ENCODE measurements at regions of chr22 and their contacts with region 1.

Region 1: GRCh38 chr22:23591201-23591791 is 11.2 kb upstream of the IGLL1 start:
- DNase-seq: peak; percentile 59
- H3K4me3 ChIP-seq: no peak overlapping the region
- H3K27ac ChIP-seq: no peak overlapping the region
- H3K4me1 ChIP-seq: no peaks in the 10 kb centered on the region
- H3K27me3 ChIP-seq: no peaks in the 10 kb centered on the region
- CTCF ChIP-seq: peak; percentile 88 to 92
- POLR2A ChIP-seq: no peak

Region 2: DNA sequence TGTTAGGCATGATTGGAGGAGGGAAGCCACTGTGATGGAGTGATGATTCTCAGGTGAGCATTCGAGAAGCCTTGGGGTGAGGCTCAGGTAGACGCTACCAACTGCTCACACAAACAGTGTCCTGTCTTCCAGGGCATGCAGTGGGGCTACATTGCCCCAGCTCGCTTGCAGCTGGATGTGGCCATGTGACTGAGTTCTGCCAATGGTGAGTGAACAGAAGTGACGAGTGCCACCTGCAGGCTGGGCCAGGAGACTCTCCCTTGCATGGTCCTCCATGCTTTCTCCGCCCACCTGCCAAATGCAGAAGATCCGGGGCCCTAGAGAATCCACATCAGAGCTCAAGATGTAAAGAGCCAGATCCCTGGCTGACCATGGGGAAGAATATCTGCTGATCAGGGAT is 215.0 kb before region 1 on chr22:
- CTCF ChIA-PET with region 1: no interaction called
- POLR2A ChIA-PET with region 1: no interaction called
- dilution Hi-C with region 1: no loop called
- intact Hi-C with region 1: no loop called
- DNase-seq: peak; percentile 20
- H3K4me3 ChIP-seq: no peak overlapping the region
- H3K27ac ChIP-seq: no peak overlapping the region
- H3K4me1 ChIP-seq: no peaks in the 10 kb centered on the region
- H3K27me3 ChIP-seq: no peaks in the 10 kb centered on the region
- CTCF ChIP-seq: peak; percentile 21 to 44
- POLR2A ChIP-seq: no peak

Region 3: DNA sequence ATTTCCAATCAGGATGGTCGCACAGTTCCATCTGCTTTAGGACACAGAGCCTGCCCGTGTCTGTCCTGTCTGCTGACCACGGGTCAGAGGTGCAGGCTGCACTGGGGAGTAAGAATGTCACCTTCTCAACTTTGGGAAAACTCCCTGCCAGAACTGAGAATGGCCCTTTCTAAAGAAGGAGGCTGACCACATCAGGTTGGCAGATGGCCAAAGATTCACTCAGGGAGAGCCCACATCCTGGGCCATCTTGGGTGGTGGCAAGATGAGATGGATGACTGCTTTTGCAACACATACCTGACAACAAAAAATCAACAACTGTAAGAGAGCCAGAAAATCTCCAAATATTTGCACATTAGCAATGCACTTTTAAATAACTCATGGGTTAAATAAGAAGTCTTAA is 113.1 kb before region 1 on chr22:
- CTCF ChIA-PET with region 1: no interaction called
- POLR2A ChIA-PET with region 1: no interaction called
- dilution Hi-C with region 1: no loop called
- intact Hi-C with region 1: no loop called
- DNase-seq: no peak
- H3K4me3 ChIP-seq: no peak overlapping the region
- H3K27ac ChIP-seq: no peak overlapping the region
- H3K4me1 ChIP-seq: no peaks in the 10 kb centered on the region
- H3K27me3 ChIP-seq: peaks cover 2 to 10% of the 10 kb centered on the region in 2 experiments
- CTCF ChIP-seq: no peak
- POLR2A ChIP-seq: no peak

Region 4: DNA sequence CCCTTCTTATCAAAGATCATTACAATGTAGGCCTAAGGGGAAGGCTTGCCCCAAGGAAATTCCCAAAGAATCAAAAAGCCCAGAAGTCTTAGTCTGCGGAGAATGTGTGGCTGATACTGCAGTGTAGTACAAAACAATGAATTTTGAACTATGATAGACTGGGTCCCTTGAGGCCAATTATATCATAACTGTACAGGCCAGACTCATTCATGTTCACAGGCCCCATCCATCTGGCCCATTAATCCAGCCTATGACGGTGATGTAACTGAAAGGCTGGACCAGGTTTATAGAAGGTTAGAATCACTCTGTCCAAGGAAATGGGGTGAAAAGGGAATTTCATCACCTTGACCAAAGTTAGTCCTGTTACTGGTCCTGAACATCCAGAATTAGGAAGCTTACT is 46.4 kb before region 1 on chr22:
- CTCF ChIA-PET with region 1: interaction called, 29 read pairs
- POLR2A ChIA-PET with region 1: no interaction called
- dilution Hi-C with region 1: no loop called
- intact Hi-C with region 1: loop called (anchors 1 kb)
- DNase-seq: no peak
- H3K4me3 ChIP-seq: no peak overlapping the region
- H3K27ac ChIP-seq: no peak overlapping the region
- H3K4me1 ChIP-seq: no peaks in the 10 kb centered on the region
- H3K27me3 ChIP-seq: peaks cover 2 to 5% of the 10 kb centered on the region in 2 experiments
- CTCF ChIP-seq: no peak
- POLR2A ChIP-seq: no peak

Region 5: GRCh38 chr22:23578306-23578705 is 13.0 kb before region 1 on chr22:
- CTCF ChIA-PET with region 1: interaction called, 14 read pairs
- POLR2A ChIA-PET with region 1: no interaction called
- dilution Hi-C with region 1: no loop called
- intact Hi-C with region 1: no loop called
- DNase-seq: no peak
- H3K4me3 ChIP-seq: no peak overlapping the region
- H3K27ac ChIP-seq: no peak overlapping the region
- H3K4me1 ChIP-seq: no peaks in the 10 kb centered on the region
- H3K27me3 ChIP-seq: no peaks in the 10 kb centered on the region
- CTCF ChIP-seq: no peak
- POLR2A ChIP-seq: no peak

Region 6: DNA sequence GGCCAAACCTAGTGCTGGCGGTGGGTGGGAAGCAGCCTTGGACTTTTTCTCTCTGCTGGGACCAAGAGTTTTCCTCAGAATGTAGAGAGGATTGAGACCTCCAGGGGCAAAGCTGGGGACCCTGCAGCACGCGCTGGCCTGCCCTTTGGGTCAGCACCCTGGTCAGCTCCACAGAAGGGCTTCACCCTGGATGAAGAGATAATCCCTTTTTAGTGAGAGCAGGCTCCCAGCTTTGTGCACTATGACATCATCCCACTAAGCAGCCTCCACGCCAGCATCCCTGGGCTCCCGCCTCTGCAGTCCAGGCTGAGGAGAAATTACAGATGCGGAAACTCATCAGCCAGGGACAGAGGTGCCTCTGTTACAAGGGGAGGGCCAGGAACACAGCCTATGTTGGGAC is 17.3 kb after region 1 on chr22:
- CTCF ChIA-PET with region 1: interaction called, 12 read pairs
- POLR2A ChIA-PET with region 1: no interaction called
- dilution Hi-C with region 1: no loop called
- intact Hi-C with region 1: no loop called
- DNase-seq: no peak
- H3K4me3 ChIP-seq: no peak overlapping the region
- H3K27ac ChIP-seq: no peak overlapping the region
- H3K4me1 ChIP-seq: no peaks in the 10 kb centered on the region
- H3K27me3 ChIP-seq: peaks cover under 1 to 2% of the 10 kb centered on the region in 2 experiments
- CTCF ChIP-seq: no peak
- POLR2A ChIP-seq: no peak

Measured in endothelial cell of umbilical vein (primary cell).